Mucosa of descending colon (tissue), 3 donors: ENCODE measurements at regions of chr3 and their contacts with region 1.

Region 1: GRCh38 chr3:15108082-15108545 is 9.2 kb upstream of the RBSN start:
- DNase-seq: peak; percentile 47 to 82 (median 70)
- ATAC-seq: peak; percentile 93
- H3K4me3 ChIP-seq: no peak overlapping the region
- H3K4me1 ChIP-seq: peaks cover 3% of the 10 kb centered on the region
- CTCF ChIP-seq: peak; percentile 90

Region 2: DNA sequence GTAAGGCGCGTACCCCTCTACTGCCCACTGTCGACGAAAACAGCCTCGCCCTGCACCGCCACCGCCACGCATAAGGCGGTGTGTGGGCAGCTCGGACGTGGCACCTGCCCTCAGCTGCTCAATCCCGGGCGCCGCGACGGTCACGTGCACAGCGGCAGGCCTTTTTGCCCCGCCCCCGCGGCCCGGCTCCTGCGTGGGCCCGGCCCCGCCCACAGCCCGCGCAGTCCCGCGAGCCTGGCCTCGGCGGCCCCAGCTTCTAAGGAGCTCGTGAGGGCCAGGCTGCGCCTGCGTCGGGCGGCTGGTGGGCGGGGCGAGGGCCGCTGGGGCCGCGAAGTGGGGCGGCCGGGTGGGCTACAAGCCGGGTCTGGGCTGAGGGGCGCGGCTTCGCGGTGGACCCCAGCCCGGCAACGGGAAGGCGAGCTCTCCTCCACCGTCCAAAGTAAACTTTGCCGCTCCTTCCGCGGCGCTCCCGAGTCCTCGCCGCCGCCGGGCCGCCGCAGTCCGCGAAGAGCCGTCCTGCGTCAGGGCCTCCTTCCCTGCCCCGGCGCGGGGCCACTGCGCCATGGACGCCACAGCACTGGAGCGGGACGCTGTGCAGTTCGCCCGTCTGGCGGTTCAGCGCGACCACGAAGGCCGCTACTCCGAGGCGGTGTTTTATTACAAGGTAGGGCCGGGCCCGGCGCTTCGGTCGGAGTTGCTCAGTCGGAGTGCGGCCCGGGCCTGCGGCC is 98.0 kb after region 1 on chr3 and contains the start of gene CAPN7:
- intact Hi-C with region 1: loop called in 1 of 2 experiments (anchors 10 kb)
- DNase-seq: peak; percentile 96 to 97 (median 97)
- ATAC-seq: peak; percentile 97
- H3K4me3 ChIP-seq: peak within 1 kb of the TSS; percentile 92
- H3K4me1 ChIP-seq: peaks cover 19% of the 10 kb centered on the region
- CTCF ChIP-seq: peak; percentile 28
- total RNA-seq, gene CAPN7: 26.8 to 56.5 (median 44.9) TPM

Region 3: DNA sequence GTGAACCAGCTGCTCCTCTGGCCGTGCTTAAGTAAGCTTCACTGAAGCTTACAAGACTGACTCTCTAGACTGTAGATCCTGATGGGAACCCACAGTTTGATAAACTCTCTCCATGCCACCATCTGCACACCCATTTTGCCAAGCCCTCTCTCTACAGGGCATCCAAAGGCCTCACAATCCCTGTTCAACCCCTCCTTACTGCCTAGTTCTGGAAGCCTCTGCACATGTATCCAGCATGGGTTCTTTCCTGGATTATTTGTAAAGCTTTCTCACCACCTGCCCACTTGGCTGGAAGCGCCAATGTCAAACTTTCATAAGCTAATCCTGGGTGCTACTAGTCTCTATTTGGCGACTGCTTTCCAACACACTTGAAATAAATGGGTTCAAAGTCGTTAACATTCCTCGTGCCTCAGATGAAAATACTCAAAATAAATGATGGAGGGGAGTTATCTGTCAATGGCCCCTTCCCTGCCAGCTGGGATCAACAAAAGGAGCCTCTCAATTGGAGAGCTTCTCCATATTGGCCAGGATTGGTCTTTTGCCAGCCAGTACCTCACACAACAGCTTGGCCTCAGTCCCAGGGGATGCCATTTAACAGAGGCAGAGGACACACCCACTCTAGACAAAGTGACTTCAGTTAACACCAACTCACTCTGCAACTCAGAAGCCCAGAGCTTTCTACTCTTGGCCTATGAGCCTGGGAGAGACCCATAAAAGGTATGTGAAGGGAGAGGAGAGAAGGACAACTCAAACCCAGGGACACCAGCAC is 176.2 kb after region 1 on chr3:
- intact Hi-C with region 1: no loop called
- DNase-seq: peak in 1 of 3 donors; percentile 63
- ATAC-seq: peak; percentile 45
- H3K4me3 ChIP-seq: no peak overlapping the region
- H3K4me1 ChIP-seq: no peaks in the 10 kb centered on the region
- CTCF ChIP-seq: no peak